ENCODE measurements at regions of chr15 and their contacts with region 1.

Region 1: GRCh38 chr15:70512772-70513362 is 250.5 kb downstream of the UACA start:
- DNase-seq: peak; percentile 82
- CTCF ChIP-seq: peak; percentile 97

Region 2: GRCh38 chr15:70362886-70363285 is 150.0 kb before region 1 on chr15:
- CTCF ChIA-PET with region 1: no interaction called
- POLR2A ChIA-PET with region 1: no interaction called
- DNase-seq: peak; percentile 49
- CTCF ChIP-seq: peak; percentile 50

Region 3: DNA sequence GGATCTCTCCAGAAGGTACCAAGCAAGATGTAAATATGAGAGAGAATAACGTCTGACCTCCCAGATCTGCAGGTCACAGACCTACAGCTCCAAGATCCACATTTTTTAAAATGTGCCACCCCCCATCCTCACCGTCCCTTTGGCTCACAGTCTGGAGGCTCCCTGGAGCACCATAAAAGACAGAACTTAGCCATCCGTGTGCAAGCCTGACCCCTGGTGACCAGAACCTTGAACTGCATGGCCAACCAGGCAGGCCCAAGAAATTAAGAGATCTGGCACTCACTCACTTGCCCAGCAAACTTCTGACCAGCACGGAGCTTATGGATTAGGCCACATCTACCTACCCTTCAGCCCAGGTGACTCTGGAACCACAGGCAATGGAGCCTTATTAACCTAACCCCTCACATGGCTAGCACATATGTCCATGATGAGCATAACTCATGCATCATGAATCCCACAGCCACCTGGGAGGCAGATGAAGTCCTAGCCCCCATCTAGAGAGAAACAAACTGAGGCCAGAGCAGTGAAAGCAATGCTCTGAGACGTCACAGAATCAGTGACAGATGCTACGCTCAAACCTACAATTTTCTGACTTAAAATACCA is 24.8 kb before region 1 on chr15:
- CTCF ChIA-PET with region 1: interaction called, 101 read pairs
- POLR2A ChIA-PET with region 1: no interaction called
- DNase-seq: peak; percentile 73
- CTCF ChIP-seq: peak; percentile 93

Region 4: GRCh38 chr15:70494852-70495571 is 17.9 kb before region 1 on chr15:
- CTCF ChIA-PET with region 1: interaction called, 101 read pairs
- POLR2A ChIA-PET with region 1: no interaction called
- DNase-seq: no peak
- CTCF ChIP-seq: no peak

Region 5: DNA sequence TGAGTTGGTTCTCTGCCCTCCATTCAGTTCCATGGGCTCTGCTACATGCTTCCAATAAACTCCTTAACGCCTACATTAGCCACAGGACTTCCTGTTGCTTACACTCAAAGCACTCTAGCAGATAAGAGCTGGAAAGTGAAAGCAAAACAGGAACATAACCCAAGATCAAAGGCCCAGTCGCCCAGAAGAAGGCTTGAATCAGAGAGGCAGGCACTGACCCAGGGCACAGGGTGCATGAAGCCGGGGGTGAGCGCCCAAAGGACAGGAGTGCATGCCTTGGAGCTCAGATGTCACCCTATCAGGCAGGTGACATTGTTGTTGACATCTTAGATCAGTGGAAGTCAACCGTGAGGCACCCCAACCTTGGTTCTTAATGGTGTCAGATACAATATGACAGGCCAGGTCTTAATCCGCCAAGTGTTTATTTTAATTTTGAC is 15.4 kb after region 1 on chr15:
- CTCF ChIA-PET with region 1: interaction called, 11 read pairs
- POLR2A ChIA-PET with region 1: no interaction called
- DNase-seq: peak; percentile 74
- CTCF ChIP-seq: no peak

Region 6: DNA sequence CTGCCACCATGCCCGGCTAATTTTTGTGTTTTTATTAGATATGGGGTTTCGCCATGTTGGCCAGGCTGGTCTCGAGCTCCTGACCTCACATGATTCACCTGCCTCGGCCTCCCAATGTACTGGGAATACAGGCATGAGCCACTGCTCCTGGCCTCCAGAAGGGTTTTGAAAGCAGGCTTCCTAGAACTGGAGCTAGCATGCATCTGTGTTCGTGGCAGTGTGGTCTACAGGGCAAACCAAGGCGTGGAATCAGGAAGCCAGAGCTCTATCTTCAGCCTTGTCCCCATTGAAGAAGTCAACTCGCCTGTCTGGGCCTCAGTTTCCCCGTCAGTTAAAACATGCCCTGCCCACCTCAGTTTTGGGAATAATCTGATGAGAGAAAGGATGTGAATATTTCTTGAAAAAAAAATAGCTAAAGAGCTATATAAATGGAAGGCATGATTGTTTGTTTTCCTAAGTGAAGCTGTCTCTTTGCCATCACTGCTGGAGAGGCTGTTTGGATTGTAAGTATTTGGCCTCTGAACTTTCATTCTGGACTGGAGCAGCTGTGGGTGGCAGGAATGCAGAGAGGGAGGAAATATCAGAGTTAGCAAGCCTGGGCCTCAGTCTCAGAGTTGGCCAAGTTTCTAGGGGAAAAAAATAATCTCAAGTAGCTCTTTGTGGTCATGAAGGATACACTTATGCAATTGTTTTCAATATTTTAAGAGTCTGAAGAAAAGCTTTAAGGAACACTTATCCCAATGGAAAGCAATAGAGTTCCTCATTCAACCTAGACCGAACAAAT is 287.0 kb after region 1 on chr15:
- CTCF ChIA-PET with region 1: no interaction called
- POLR2A ChIA-PET with region 1: no interaction called
- DNase-seq: no peak
- CTCF ChIP-seq: no peak

Measured in GM10248 (cell line).